ENCODE measurements at regions of chr12 and their contacts with region 1.

Region 1: GRCh38 chr12:109719236-109720022 is 5.8 kb downstream of the FAM222A start:
- DNase-seq: no peak
- ATAC-seq: no peak
- H3K4me3 ChIP-seq: no peak overlapping the region
- H3K27ac ChIP-seq: peak overlapping the region; percentile 74 to 94 (median 88)
- H3K4me1 ChIP-seq: peaks cover 15 to 97% (median 58%) of the 10 kb centered on the region in 9 donors
- H3K27me3 ChIP-seq: peaks cover 0 to 49% (median 0%) of the 10 kb centered on the region in 7 donors
- CTCF ChIP-seq: peak in 1 of 9 donors; percentile 9

Region 2: DNA sequence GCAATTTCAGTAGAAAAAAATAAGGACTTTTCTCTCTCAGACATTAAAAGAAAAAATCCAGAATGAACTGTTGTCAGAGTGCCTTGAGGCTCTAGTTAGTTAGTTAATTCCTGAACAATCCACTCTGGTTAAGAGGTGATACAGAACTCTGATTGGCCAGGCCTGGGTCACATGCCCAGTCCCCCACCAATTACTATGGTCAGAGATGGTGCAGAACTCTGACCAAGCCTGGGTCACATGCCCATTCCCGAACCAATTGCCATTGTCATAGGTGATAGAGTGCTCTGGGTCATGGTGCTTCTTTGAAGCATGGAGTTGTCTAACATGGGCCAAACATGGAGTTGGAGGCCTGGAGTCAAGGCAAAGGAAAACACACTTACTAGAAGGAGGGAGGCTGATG is 382.8 kb before region 1 on chr12:
- intact Hi-C with region 1: no loop called
- DNase-seq: no peak
- ATAC-seq: no peak
- H3K4me3 ChIP-seq: no peak overlapping the region
- H3K27ac ChIP-seq: no peak overlapping the region
- H3K4me1 ChIP-seq: no peaks in the 10 kb centered on the region
- H3K27me3 ChIP-seq: peaks cover 0 to 18% (median 0%) of the 10 kb centered on the region in 7 donors
- CTCF ChIP-seq: no peak

Region 3: GRCh38 chr12:109680264-109681005 is 39.0 kb before region 1 on chr12:
- intact Hi-C with region 1: no loop called
- DNase-seq: no peak
- ATAC-seq: no peak
- H3K4me3 ChIP-seq: no peak overlapping the region
- H3K27ac ChIP-seq: no peak overlapping the region
- H3K4me1 ChIP-seq: peaks cover 0 to 5% (median 0%) of the 10 kb centered on the region in 9 donors
- H3K27me3 ChIP-seq: peaks cover 0 to 6% (median 0%) of the 10 kb centered on the region in 7 donors
- CTCF ChIP-seq: no peak

Region 4: GRCh38 chr12:109758376-109759075 is 39.1 kb after region 1 on chr12:
- intact Hi-C with region 1: loop called in 1 of 10 experiments (anchors 5 kb)
- DNase-seq: no peak
- ATAC-seq: no peak
- H3K4me3 ChIP-seq: no peak overlapping the region
- H3K27ac ChIP-seq: no peak overlapping the region
- H3K4me1 ChIP-seq: peaks cover 0 to 18% (median 14%) of the 10 kb centered on the region in 9 donors
- H3K27me3 ChIP-seq: no peaks in the 10 kb centered on the region
- CTCF ChIP-seq: no peak

Measured in heart right ventricle (tissue), 16 donors.